ENCODE measurements at regions of chr17 and their contacts with region 1.

Region 1: DNA sequence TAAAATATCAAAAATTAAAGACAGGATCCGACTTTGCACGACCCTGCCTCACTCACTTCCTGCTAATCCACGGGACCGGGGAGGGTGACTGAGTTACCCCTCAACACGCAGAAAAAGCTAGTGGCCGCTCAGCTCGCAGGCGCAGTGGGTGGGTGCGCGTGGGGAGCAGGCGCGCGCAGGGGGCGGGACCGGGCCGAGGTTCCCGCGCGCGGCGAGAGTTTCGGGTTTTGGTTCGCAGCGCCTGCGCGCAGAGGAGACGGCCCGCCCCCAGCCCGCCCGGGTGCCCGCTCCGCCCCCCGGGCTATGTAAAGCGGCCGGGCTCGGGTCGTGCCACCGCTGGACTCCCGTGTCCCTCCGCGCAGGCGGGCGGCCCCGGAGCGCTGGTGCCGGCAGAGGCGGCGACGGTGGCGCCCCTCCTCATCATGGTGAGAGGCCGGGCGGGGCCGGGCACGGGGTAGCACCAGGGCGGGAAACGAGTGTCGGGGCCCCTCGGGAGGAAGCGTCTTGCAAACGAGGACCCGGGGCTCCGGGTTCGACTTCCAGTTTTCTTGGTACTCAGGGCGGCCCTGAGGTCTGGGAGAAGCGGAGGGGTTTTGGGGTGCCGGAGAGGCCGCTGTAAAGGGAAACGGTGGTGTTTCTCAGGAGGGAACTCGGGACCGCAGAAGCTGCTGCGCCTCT is at the start of gene CNP:
- DNase-seq: peak; percentile 94
- ATAC-seq: peak; percentile 85
- H3K4me3 ChIP-seq: peak within 1 kb of the TSS; percentile 65 to 91 (median 82)
- H3K4me3 Mint-ChIP-seq: peak within 1 kb of the TSS; percentile 85
- H3K27ac ChIP-seq: peak within 1 kb of the TSS; percentile 67 to 75
- H3K27ac Mint-ChIP-seq: peak within 1 kb of the TSS; percentile 86
- H3K4me1 ChIP-seq: peaks cover 16 to 38% of the 10 kb centered on the region in 2 donors
- H3K4me1 Mint-ChIP-seq: peaks cover 37% of the 10 kb centered on the region
- H3K27me3 ChIP-seq: no peaks in the 10 kb centered on the region
- H3K27me3 Mint-ChIP-seq: no peaks in the 10 kb centered on the region
- CTCF ChIP-seq: no peak
- total RNA-seq, gene CNP: 45.2 and 59.0 TPM in 2 replicates

Region 2: DNA sequence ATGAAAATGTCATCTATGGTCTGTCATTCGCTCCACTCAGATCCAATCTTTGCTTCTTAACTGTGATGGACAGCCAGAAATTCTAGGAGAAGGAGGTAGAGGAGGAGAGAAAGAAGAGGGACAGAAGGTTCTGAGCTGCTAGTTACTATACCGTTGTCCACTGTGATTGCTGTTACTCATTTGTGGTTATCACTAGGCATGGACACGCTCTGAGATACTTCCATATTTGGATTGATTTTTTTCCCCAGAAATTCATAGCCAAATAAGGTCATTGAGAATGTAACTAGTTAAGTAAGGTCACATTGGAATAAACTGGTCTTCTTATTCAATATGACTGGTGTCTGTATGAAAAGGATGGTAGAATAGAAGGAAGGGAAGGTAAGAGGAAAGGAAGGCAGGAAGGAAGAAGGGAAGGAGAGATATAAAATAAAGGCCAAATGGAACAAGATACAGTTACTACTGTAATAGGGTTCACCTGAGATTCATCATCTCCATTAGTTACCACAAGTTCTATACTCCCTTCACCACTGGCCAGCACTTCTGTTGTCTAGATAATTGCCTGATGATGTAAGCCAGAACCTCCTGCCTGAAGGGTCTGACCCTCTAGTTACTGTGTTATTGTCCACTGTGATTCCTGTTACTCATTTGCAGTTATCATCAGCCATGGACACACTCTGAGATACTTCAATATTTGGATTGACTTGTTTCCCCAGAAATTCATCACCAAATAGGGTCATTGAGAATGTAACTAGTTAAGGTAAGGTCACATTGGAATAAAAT is 688.2 kb before region 1 on chr17:
- CTCF ChIA-PET with region 1: no interaction called
- POLR2A ChIA-PET with region 1: no interaction called
- intact Hi-C with region 1: no loop called
- DNase-seq: peak; percentile 0
- ATAC-seq: no peak
- H3K4me3 ChIP-seq: no peak overlapping the region
- H3K4me3 Mint-ChIP-seq: no peak overlapping the region
- H3K27ac ChIP-seq: no peak overlapping the region
- H3K27ac Mint-ChIP-seq: no peak overlapping the region
- H3K4me1 ChIP-seq: no peaks in the 10 kb centered on the region
- H3K4me1 Mint-ChIP-seq: no peaks in the 10 kb centered on the region
- H3K27me3 ChIP-seq: peaks cover 0 to 9% (median 4%) of the 10 kb centered on the region in 4 experiments
- H3K27me3 Mint-ChIP-seq: peaks cover 51% of the 10 kb centered on the region
- CTCF ChIP-seq: no peak

Region 3: DNA sequence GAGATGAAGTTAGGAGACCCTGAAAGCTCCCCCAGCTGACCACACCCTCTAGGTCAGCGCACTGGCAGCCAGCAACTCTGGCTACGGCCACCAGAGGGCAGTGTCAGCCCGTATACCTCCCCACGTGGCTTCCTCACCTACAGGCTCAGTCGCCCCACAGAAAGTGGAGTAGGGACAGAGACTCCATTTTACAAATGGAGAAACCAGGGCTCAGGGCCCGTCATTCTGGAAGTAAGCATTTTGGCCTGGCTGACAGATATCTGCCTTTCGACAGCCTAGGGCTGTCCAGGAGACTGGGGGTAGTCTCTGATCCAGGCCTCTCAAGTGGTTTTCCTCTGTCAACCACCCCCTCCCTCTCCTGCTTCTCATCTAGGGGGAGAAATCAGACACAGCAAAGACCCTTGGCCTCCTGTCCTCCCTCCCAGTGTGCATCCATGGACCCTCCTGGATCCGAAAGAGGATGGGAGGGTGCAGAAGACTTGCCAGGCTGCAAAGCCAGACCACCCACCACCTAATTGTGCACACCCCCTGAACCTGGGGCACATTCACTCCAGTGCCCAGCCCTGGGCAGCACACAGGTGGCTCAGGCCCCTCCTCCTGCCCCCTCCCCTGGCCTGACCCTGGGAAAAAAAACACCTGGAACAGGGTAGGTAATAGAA is 228.4 kb before region 1 on chr17:
- CTCF ChIA-PET with region 1: interaction called, 3 read pairs
- POLR2A ChIA-PET with region 1: no interaction called
- intact Hi-C with region 1: loop called (anchors 10 kb)
- DNase-seq: peak; percentile 88
- ATAC-seq: peak; percentile 90
- H3K4me3 ChIP-seq: no peak overlapping the region
- H3K4me3 Mint-ChIP-seq: no peak overlapping the region
- H3K27ac ChIP-seq: no peak overlapping the region
- H3K27ac Mint-ChIP-seq: no peak overlapping the region
- H3K4me1 ChIP-seq: peaks cover 23 to 25% of the 10 kb centered on the region in 2 donors
- H3K4me1 Mint-ChIP-seq: peaks cover 11% of the 10 kb centered on the region
- H3K27me3 ChIP-seq: peaks cover 0 to 42% (median 27%) of the 10 kb centered on the region in 4 experiments
- H3K27me3 Mint-ChIP-seq: peaks cover 28% of the 10 kb centered on the region
- CTCF ChIP-seq: peak; percentile 99

Region 4: DNA sequence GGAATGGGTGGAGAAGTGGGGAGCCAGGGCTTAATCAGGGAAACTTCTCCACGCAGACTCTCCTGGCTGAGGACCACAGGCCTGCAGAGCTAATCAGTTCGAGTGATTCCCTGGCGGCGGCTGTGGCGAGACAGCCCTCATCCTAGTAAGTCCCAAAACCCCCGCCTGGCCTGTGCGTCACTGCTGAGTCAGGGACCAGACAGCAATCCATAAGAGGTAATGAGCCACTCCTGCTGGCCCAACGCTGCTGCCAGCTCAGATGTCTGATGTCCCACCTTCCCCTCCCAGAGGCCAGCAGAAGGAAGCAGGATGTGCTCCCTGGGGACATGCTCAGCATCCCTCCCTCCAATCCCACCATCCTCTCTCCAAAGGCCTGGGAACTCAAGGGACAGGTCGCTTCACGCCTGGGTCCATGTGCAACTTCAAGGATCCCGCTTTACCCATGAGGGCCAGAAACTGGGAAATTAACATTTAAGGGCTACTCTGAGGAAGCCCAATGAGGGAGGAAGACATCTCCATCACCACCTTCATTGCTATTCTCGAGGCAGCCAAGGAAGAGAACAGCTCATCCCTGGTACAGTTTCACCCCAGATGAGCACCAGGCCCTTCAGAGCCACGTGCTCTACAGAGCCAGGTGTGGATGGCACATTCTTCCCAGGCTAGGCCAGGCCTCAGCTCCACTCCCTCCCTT is 55.8 kb before region 1 on chr17:
- CTCF ChIA-PET with region 1: no interaction called
- POLR2A ChIA-PET with region 1: no interaction called
- intact Hi-C with region 1: no loop called
- DNase-seq: no peak
- ATAC-seq: no peak
- H3K4me3 ChIP-seq: no peak overlapping the region
- H3K4me3 Mint-ChIP-seq: no peak overlapping the region
- H3K27ac ChIP-seq: no peak overlapping the region
- H3K27ac Mint-ChIP-seq: no peak overlapping the region
- H3K4me1 ChIP-seq: no peaks in the 10 kb centered on the region
- H3K4me1 Mint-ChIP-seq: peaks cover 17% of the 10 kb centered on the region
- H3K27me3 ChIP-seq: no peaks in the 10 kb centered on the region
- H3K27me3 Mint-ChIP-seq: no peaks in the 10 kb centered on the region
- CTCF ChIP-seq: no peak

Region 5: DNA sequence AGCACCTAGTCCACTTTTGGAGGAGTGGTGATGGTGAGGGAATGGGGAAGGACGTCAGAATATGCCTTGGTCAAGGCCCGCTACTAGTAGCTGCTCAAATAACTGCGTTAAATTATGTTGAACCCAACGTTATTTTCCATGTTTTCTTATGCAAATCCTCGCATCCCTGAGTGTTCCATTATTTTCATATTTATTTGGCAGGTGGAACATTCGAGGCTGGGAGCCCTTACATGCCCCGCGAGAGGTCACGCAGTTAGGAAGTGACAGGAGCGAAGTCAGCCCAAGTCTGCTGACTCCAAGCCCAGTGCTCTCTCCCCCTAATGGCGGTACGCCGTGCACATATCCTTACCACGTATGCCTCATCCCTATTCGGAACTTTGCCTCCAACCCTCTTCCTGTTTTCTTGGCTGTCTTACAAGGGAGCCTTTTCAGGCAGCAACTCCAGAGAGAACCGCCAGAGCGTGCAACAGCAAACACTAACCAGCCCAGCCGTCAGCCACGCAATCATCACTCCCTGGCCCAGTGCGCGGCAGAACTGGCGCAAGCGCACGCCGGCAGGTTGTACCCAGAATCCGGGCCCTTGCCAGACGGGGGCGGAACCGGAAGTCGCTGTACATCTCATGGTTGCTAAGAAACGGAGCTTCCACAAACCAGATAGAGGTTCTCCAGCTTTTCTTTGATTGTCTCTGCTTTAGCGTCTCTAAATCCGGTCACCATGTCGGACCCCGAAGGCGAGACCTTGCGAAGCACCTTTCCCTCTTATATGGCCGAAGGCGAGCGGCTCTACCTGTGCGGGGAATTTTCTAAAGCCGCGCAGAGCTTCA is 36.4 kb before region 1 on chr17 and contains the start of gene ODAD4:
- CTCF ChIA-PET with region 1: interaction called, 4 read pairs
- POLR2A ChIA-PET with region 1: interaction called, 7 read pairs
- intact Hi-C with region 1: loop called (anchors 2 kb)
- DNase-seq: peak; percentile 95
- ATAC-seq: peak; percentile 99
- H3K4me3 ChIP-seq: peak within 1 kb of the TSS; percentile 46 to 92 (median 81)
- H3K4me3 Mint-ChIP-seq: peak within 1 kb of the TSS; percentile 96
- H3K27ac ChIP-seq: peak within 1 kb of the TSS; percentile 60 to 83
- H3K27ac Mint-ChIP-seq: peak within 1 kb of the TSS; percentile 88
- H3K4me1 ChIP-seq: peaks cover 10 to 32% of the 10 kb centered on the region in 2 donors
- H3K4me1 Mint-ChIP-seq: peaks cover 30% of the 10 kb centered on the region
- H3K27me3 ChIP-seq: no peaks in the 10 kb centered on the region
- H3K27me3 Mint-ChIP-seq: no peaks in the 10 kb centered on the region
- CTCF ChIP-seq: no peak
- total RNA-seq, gene ODAD4: 0.27 and 0.56 TPM in 2 replicates

Region 6: GRCh38 chr17:42019509-42020404 is 53.2 kb after region 1 on chr17 and contains the start of gene NKIRAS2:
- CTCF ChIA-PET with region 1: interaction called, 90 read pairs
- POLR2A ChIA-PET with region 1: interaction called, 32 read pairs
- intact Hi-C with region 1: loop called (anchors 1 kb)
- DNase-seq: peak; percentile 93
- ATAC-seq: peak; percentile 77
- H3K4me3 ChIP-seq: peak within 1 kb of the TSS; percentile 65 to 87 (median 73)
- H3K4me3 Mint-ChIP-seq: peak within 1 kb of the TSS; percentile 100
- H3K27ac ChIP-seq: peak within 1 kb of the TSS; percentile 28 to 78
- H3K27ac Mint-ChIP-seq: peak within 1 kb of the TSS; percentile 83
- H3K4me1 ChIP-seq: peaks cover 46 to 53% of the 10 kb centered on the region in 2 donors
- H3K4me1 Mint-ChIP-seq: peaks cover 64% of the 10 kb centered on the region
- H3K27me3 ChIP-seq: no peaks in the 10 kb centered on the region
- H3K27me3 Mint-ChIP-seq: no peaks in the 10 kb centered on the region
- CTCF ChIP-seq: peak; percentile 89
- total RNA-seq, gene NKIRAS2: 22.0 and 23.7 TPM in 2 replicates

Region 7: GRCh38 chr17:42101513-42102319 is 135.1 kb after region 1 on chr17:
- CTCF ChIA-PET with region 1: interaction called, 10 read pairs
- POLR2A ChIA-PET with region 1: no interaction called
- intact Hi-C with region 1: loop called (anchors 1 kb)
- DNase-seq: peak; percentile 59
- ATAC-seq: peak; percentile 59
- H3K4me3 ChIP-seq: no peak overlapping the region
- H3K4me3 Mint-ChIP-seq: no peak overlapping the region
- H3K27ac ChIP-seq: no peak overlapping the region
- H3K27ac Mint-ChIP-seq: no peak overlapping the region
- H3K4me1 ChIP-seq: peaks cover 11 to 17% of the 10 kb centered on the region in 2 donors
- H3K4me1 Mint-ChIP-seq: peaks cover 9% of the 10 kb centered on the region
- H3K27me3 ChIP-seq: peaks cover 0 to 15% (median 9%) of the 10 kb centered on the region in 4 experiments
- H3K27me3 Mint-ChIP-seq: peaks cover 3% of the 10 kb centered on the region
- CTCF ChIP-seq: peak; percentile 78

Region 8: DNA sequence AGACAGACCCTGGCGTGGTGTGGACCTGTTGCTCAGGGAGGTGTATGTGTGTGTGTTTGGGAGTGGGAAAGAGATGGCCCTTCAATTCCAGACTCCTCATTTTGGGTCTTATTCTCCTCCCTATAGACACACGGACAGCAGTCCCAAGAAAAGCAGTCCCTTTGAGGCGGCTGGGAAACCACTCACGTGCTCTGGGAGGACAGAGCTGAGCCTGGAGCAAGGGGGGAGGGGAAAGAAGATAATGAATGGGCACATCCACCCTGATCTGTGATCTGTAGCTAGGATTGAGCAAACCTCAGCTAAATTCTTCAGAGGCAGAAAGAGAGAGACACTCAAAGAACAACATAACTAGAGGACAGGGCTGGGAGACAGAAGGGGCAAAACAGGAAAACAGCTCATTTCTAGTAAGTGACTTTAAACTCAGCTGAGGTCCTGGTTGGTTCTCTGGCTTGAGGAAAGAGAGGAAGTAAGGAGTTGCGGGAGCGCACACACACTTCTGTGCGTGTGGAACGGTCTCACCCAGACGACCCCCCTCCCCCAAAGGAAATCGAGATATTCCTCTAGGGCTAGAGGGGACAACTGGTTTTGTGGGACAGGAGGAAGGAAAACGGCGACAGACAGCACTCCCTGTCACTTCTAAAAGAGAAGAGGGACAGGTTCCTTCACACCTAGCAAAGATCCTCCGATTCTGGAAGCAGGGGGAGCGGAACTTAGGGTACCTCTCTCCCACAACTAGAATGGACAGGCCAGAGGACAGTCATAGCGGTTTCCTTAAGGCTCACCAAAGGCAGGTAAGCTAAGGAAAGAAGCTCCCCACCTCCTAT is 187.5 kb after region 1 on chr17:
- CTCF ChIA-PET with region 1: interaction called, 8 read pairs
- POLR2A ChIA-PET with region 1: no interaction called
- intact Hi-C with region 1: loop called (anchors 1 kb)
- DNase-seq: no peak
- ATAC-seq: no peak
- H3K4me3 ChIP-seq: peak overlapping the region; percentile 91 to 100 (median 99)
- H3K4me3 Mint-ChIP-seq: peak overlapping the region; percentile 94
- H3K27ac ChIP-seq: peak overlapping the region; percentile 74 to 94
- H3K27ac Mint-ChIP-seq: peak overlapping the region; percentile 96
- H3K4me1 ChIP-seq: peaks cover 14 to 23% of the 10 kb centered on the region in 2 donors
- H3K4me1 Mint-ChIP-seq: peaks cover 34% of the 10 kb centered on the region
- H3K27me3 ChIP-seq: no peaks in the 10 kb centered on the region
- H3K27me3 Mint-ChIP-seq: no peaks in the 10 kb centered on the region
- CTCF ChIP-seq: no peak

Measured in B cell (primary cell).